ENCODE measurements at regions of chr3 and their contacts with region 1.

Region 1: DNA sequence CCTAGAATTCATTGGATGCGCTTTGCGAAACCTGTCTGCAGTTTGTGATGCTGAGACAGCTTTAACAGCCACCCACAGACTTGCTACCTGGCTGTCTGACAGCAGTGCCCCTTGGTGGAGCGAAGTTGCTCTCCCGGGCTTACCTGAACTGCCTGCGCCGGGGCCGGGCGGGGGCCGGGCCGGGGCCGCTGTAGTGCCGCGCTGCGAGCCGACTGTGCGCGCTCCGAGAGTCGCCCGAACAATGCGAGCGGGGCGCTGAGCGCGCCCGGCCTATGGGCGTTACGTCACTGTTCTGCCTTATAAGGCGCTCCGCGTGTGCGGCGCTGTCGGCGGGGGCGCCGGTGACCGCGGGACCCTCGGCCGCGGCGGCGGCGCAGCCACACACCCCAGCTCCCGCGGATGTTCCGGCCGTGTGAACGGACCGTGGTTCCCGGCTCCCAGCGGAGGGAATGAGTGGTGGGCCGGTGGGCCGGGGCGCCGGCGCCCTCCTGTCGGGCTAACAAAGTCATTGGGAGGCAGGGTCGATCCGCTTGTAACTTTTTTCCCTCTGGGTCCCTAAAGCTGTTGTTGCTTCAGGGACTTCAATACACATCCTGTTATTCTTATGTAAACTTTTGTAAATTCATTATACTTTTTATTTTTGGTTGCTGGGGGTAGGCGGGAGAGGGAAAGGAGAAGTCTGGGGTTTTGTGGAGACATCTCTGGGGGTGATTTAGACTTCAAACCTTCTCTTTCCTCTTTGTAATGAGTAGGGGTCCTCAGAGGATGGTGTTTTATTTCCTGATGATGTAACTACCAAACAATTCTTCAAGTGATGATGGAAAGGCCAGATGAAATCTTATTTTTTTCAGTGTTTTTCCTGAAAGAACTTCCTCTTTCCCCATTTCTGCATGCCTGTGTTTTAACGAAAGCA is 58.5 kb downstream of the CMSS1 start:
- DNase-seq: peak; percentile 91 to 94
- ATAC-seq: peak; percentile 94
- H3K4me3 ChIP-seq: peak overlapping the region; percentile 68 to 94
- H3K27ac ChIP-seq: peak overlapping the region; percentile 82 to 94
- H3K4me1 ChIP-seq: no peaks in the 10 kb centered on the region
- H3K27me3 ChIP-seq: no peaks in the 10 kb centered on the region

Region 2: GRCh38 chr3:99925584-99926212 is 49.5 kb after region 1 on chr3:
- intact Hi-C with region 1: loop called in 1 of 2 experiments (anchors 5 kb)
- DNase-seq: peak in 1 of 2 donors; percentile 61
- ATAC-seq: peak; percentile 34
- H3K4me3 ChIP-seq: no peak overlapping the region
- H3K27ac ChIP-seq: peak overlapping the region; percentile 33 to 95
- H3K4me1 ChIP-seq: peaks cover 8 to 12% of the 10 kb centered on the region in 2 donors
- H3K27me3 ChIP-seq: no peaks in the 10 kb centered on the region

Region 3: GRCh38 chr3:99938270-99938911 is 62.2 kb after region 1 on chr3:
- intact Hi-C with region 1: loop called in 1 of 2 experiments (anchors 5 kb)
- DNase-seq: no peak
- ATAC-seq: peak; percentile 55
- H3K4me3 ChIP-seq: no peak overlapping the region
- H3K27ac ChIP-seq: peak overlapping the region; percentile 80 to 100
- H3K4me1 ChIP-seq: peaks cover 9 to 20% of the 10 kb centered on the region in 2 donors
- H3K27me3 ChIP-seq: no peaks in the 10 kb centered on the region

Measured in aorta (tissue), 5 donors.